CD8-positive, alpha-beta memory T cell (primary cell): ENCODE measurements at regions of chr12 and their contacts with region 1.

Region 1: DNA sequence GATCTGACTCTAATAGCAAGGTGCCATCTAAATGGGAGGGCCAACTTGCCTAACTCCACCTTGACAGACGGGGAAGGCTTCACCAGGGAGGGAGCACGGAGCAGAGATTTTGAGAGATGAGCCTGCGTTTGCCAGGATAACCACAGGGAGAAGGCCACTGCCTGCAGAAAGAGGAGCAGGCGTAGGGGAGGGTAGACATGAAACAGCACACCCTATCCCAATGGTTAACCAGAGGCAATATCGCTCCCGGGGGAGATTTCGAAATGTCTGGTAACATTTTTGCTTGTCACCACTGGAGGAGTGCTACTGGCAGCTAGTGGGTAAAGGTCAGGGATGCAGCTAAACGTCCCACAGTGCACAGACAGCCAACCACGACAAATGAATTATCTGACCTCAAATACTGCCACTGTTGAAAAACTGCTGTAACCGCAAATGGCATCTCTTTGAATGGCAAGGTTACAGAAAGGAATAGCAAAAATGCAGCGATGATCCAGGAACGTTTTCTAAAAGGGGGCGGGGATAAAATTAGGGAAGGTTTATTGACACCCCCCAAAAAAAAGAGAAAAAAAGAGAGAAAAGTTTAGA is 126.0 kb upstream of the ATF7IP start:
- DNase-seq: peak in 2 of 5 donors; percentile 9 to 51
- H3K4me3 ChIP-seq: peak overlapping the region; percentile 9
- H3K4me3 Mint-ChIP-seq: peak overlapping the region; percentile 53 to 86 (median 80)
- H3K27ac ChIP-seq: no peak overlapping the region
- H3K27ac Mint-ChIP-seq: peak overlapping the region in 6 of 8 donors; percentile 11 to 88 (median 72)
- H3K4me1 ChIP-seq: peaks cover 16% of the 10 kb centered on the region
- H3K4me1 Mint-ChIP-seq: peaks cover 21 to 23% (median 21%) of the 10 kb centered on the region in 3 donors
- H3K27me3 ChIP-seq: no peaks in the 10 kb centered on the region
- H3K27me3 Mint-ChIP-seq: no peaks in the 10 kb centered on the region

Region 2: DNA sequence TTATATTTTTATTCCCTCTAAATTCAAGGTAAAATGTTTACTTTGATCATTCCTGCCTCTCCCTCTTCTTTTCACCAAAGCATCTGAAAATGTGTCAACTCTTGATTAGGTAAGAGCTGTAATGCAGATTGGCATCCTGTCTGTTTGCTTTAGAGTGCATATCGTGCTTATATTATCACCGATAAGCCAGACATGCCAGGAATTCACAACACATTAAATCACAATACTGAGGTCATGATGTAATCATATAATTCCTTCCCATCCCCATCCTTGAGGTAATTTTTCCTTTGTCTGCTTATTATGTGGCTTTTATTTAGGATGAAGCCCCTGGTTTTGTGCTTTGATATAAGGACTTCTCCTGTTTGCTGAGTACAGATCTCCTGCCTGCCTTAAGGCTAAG is 1416.2 kb before region 1 on chr12:
- CTCF ChIA-PET with region 1: no interaction called
- POLR2A ChIA-PET with region 1: no interaction called
- DNase-seq: no peak
- H3K4me3 ChIP-seq: no peak overlapping the region
- H3K4me3 Mint-ChIP-seq: no peak overlapping the region
- H3K27ac ChIP-seq: no peak overlapping the region
- H3K27ac Mint-ChIP-seq: peak overlapping the region in 1 of 8 donors; percentile 59
- H3K4me1 ChIP-seq: no peaks in the 10 kb centered on the region
- H3K4me1 Mint-ChIP-seq: peaks cover 14 to 26% (median 26%) of the 10 kb centered on the region in 3 donors
- H3K27me3 ChIP-seq: no peaks in the 10 kb centered on the region
- H3K27me3 Mint-ChIP-seq: no peaks in the 10 kb centered on the region

Region 3: GRCh38 chr12:14257734-14258574 is 18.5 kb after region 1 on chr12:
- CTCF ChIA-PET with region 1: interaction called, 35 read pairs
- POLR2A ChIA-PET with region 1: interaction called, 5 read pairs
- DNase-seq: peak; percentile 69 to 79 (median 78)
- H3K4me3 ChIP-seq: peak overlapping the region; percentile 24
- H3K4me3 Mint-ChIP-seq: peak overlapping the region; percentile 54 to 86 (median 83)
- H3K27ac ChIP-seq: peak overlapping the region; percentile 69
- H3K27ac Mint-ChIP-seq: peak overlapping the region; percentile 81 to 98 (median 96)
- H3K4me1 ChIP-seq: peaks cover 38% of the 10 kb centered on the region
- H3K4me1 Mint-ChIP-seq: peaks cover 44 to 53% (median 49%) of the 10 kb centered on the region in 3 donors
- H3K27me3 ChIP-seq: no peaks in the 10 kb centered on the region
- H3K27me3 Mint-ChIP-seq: peaks cover 0 to 2% of the 10 kb centered on the region in 2 donors

Region 4: GRCh38 chr12:14417715-14418114 is 178.3 kb after region 1 on chr12:
- CTCF ChIA-PET with region 1: interaction called, 13 read pairs
- POLR2A ChIA-PET with region 1: interaction called, 4 read pairs
- DNase-seq: peak; percentile 51 to 85 (median 69)
- H3K4me3 ChIP-seq: no peak overlapping the region
- H3K4me3 Mint-ChIP-seq: peak overlapping the region; percentile 50 to 88 (median 85)
- H3K27ac ChIP-seq: no peak overlapping the region
- H3K27ac Mint-ChIP-seq: peak overlapping the region; percentile 23 to 97 (median 89)
- H3K4me1 ChIP-seq: peaks cover 63% of the 10 kb centered on the region
- H3K4me1 Mint-ChIP-seq: peaks cover 65 to 88% (median 84%) of the 10 kb centered on the region in 3 donors
- H3K27me3 ChIP-seq: no peaks in the 10 kb centered on the region
- H3K27me3 Mint-ChIP-seq: no peaks in the 10 kb centered on the region

Region 5: GRCh38 chr12:14454098-14454907 is 214.9 kb after region 1 on chr12:
- CTCF ChIA-PET with region 1: interaction called, 19 read pairs
- POLR2A ChIA-PET with region 1: no interaction called
- DNase-seq: peak in 2 of 5 donors; percentile 28 to 29
- H3K4me3 ChIP-seq: no peak overlapping the region
- H3K4me3 Mint-ChIP-seq: peak overlapping the region in 4 of 7 donors; percentile 13 to 61 (median 50)
- H3K27ac ChIP-seq: no peak overlapping the region
- H3K27ac Mint-ChIP-seq: peak overlapping the region; percentile 8 to 91 (median 80)
- H3K4me1 ChIP-seq: peaks cover 34% of the 10 kb centered on the region
- H3K4me1 Mint-ChIP-seq: peaks cover 57 to 73% (median 66%) of the 10 kb centered on the region in 3 donors
- H3K27me3 ChIP-seq: no peaks in the 10 kb centered on the region
- H3K27me3 Mint-ChIP-seq: no peaks in the 10 kb centered on the region

Region 6: DNA sequence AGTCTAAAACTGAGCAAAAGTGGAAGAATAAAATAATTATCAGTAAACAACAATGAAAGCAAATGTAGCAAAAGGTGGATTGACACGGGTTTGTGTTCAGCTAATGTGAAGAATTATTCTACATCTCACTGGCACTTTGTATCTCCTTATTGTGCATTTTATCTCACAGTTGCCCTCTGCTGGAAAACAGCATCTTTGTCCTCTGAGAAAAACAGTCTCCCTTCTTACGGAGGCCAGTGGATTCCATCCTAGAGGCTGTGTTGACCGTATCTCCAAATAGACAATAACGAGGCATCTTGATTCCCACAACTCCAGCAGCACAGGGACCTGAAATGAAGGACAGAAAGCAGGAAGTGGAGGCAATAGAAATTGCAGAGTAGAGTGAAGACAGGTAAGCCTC is 379.5 kb after region 1 on chr12:
- CTCF ChIA-PET with region 1: interaction called, 16 read pairs
- POLR2A ChIA-PET with region 1: no interaction called
- DNase-seq: peak in 2 of 5 donors; percentile 3 to 6
- H3K4me3 ChIP-seq: no peak overlapping the region
- H3K4me3 Mint-ChIP-seq: no peak overlapping the region
- H3K27ac ChIP-seq: no peak overlapping the region
- H3K27ac Mint-ChIP-seq: peak overlapping the region in 1 of 8 donors; percentile 56
- H3K4me1 ChIP-seq: no peaks in the 10 kb centered on the region
- H3K4me1 Mint-ChIP-seq: peaks cover 0 to 2% (median 0%) of the 10 kb centered on the region in 3 donors
- H3K27me3 ChIP-seq: peaks cover 4% of the 10 kb centered on the region
- H3K27me3 Mint-ChIP-seq: peaks cover 3 to 56% of the 10 kb centered on the region in 2 donors

Region 7: GRCh38 chr12:14664510-14664909 is 425.1 kb after region 1 on chr12:
- CTCF ChIA-PET with region 1: interaction called, 16 read pairs
- POLR2A ChIA-PET with region 1: interaction called, 5 read pairs
- DNase-seq: peak in 3 of 5 donors; percentile 26 to 42 (median 34)
- H3K4me3 ChIP-seq: no peak overlapping the region
- H3K4me3 Mint-ChIP-seq: no peak overlapping the region
- H3K27ac ChIP-seq: no peak overlapping the region
- H3K27ac Mint-ChIP-seq: no peak overlapping the region
- H3K4me1 ChIP-seq: no peaks in the 10 kb centered on the region
- H3K4me1 Mint-ChIP-seq: peaks cover 3 to 16% (median 9%) of the 10 kb centered on the region in 3 donors
- H3K27me3 ChIP-seq: no peaks in the 10 kb centered on the region
- H3K27me3 Mint-ChIP-seq: peaks cover 6% of the 10 kb centered on the region in 2 donors